CD4-positive, alpha-beta memory T cell (primary cell): ENCODE measurements at regions of chr3 and their contacts with region 1.

Region 1: GRCh38 chr3:196739671-196740480 is at the start of gene PAK2:
- DNase-seq: peak; percentile 85 to 90 (median 87)
- H3K4me3 ChIP-seq: peak within 1 kb of the TSS; percentile 70 to 95
- H3K4me3 Mint-ChIP-seq: peak within 1 kb of the TSS; percentile 96 to 100 (median 100)
- H3K27ac ChIP-seq: peak within 1 kb of the TSS; percentile 99
- H3K27ac Mint-ChIP-seq: peak within 1 kb of the TSS; percentile 97 to 100 (median 99)
- H3K4me1 ChIP-seq: peaks cover 42% of the 10 kb centered on the region
- H3K4me1 Mint-ChIP-seq: peaks cover 21 to 45% (median 28%) of the 10 kb centered on the region in 4 donors
- H3K27me3 ChIP-seq: no peaks in the 10 kb centered on the region
- H3K27me3 Mint-ChIP-seq: no peaks in the 10 kb centered on the region
- total RNA-seq, gene PAK2: 80.4 to 97.4 TPM

Region 2: GRCh38 chr3:196632046-196632751 is 107.7 kb before region 1 on chr3:
- CTCF ChIA-PET with region 1: interaction called, 3 read pairs
- POLR2A ChIA-PET with region 1: interaction called, 17 read pairs
- intact Hi-C with region 1: no loop called
- DNase-seq: peak; percentile 91 to 94 (median 92)
- H3K4me3 ChIP-seq: peak overlapping the region; percentile 24 to 77
- H3K4me3 Mint-ChIP-seq: peak overlapping the region; percentile 80 to 93 (median 86)
- H3K27ac ChIP-seq: peak overlapping the region; percentile 69
- H3K27ac Mint-ChIP-seq: peak overlapping the region; percentile 94 to 98 (median 96)
- H3K4me1 ChIP-seq: peaks cover 57% of the 10 kb centered on the region
- H3K4me1 Mint-ChIP-seq: peaks cover 34 to 70% (median 52%) of the 10 kb centered on the region in 4 donors
- H3K27me3 ChIP-seq: no peaks in the 10 kb centered on the region
- H3K27me3 Mint-ChIP-seq: no peaks in the 10 kb centered on the region

Region 3: DNA sequence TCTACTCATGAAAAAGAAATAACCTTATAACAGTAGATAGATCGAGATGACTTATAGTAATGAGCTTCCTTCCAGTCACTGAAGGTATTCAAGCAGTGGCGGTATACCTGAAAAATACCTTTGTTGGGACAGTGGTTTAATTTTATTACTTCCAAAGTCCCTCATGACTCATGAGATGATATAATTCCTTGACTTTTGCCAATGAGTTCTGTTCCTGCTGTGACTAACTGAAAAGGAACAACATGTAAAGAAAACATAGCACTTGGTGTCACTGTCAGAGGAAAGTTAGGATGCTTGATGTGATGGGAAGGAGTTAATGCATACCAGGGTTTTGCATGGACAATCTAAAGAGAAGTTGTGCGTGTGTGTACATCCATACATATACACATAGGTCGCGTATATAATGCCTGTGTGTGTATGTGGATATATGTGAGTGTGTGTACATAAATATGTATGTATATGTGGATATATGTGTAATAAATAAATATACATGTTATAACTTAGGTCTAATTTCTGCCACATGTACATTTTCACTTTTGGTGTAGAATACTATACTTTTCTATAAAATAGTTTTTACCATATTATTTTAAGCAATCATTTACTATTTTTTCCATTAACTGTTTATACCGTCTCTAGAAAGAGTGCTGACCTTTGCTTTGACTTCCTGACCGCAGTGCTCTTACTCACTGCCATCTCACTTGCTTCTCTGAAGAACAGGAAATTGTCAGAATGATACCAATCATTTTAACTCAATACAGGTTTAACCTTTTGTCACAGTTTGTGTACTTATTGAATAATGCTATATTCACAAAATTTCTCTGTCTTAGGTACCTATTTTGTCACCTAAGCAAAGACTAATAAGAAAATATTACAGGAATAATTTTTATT is 12.8 kb before region 1 on chr3:
- CTCF ChIA-PET with region 1: no interaction called
- POLR2A ChIA-PET with region 1: interaction called, 14 read pairs
- intact Hi-C with region 1: no loop called
- DNase-seq: peak in 3 of 5 donors; percentile 13 to 52 (median 16)
- H3K4me3 ChIP-seq: no peak overlapping the region
- H3K4me3 Mint-ChIP-seq: peak overlapping the region in 2 of 8 donors; percentile 11 to 36
- H3K27ac ChIP-seq: no peak overlapping the region
- H3K27ac Mint-ChIP-seq: peak overlapping the region in 4 of 7 donors; percentile 13 to 53 (median 44)
- H3K4me1 ChIP-seq: peaks cover 19% of the 10 kb centered on the region
- H3K4me1 Mint-ChIP-seq: peaks cover 11 to 31% (median 19%) of the 10 kb centered on the region in 4 donors
- H3K27me3 ChIP-seq: no peaks in the 10 kb centered on the region
- H3K27me3 Mint-ChIP-seq: no peaks in the 10 kb centered on the region

Region 4: DNA sequence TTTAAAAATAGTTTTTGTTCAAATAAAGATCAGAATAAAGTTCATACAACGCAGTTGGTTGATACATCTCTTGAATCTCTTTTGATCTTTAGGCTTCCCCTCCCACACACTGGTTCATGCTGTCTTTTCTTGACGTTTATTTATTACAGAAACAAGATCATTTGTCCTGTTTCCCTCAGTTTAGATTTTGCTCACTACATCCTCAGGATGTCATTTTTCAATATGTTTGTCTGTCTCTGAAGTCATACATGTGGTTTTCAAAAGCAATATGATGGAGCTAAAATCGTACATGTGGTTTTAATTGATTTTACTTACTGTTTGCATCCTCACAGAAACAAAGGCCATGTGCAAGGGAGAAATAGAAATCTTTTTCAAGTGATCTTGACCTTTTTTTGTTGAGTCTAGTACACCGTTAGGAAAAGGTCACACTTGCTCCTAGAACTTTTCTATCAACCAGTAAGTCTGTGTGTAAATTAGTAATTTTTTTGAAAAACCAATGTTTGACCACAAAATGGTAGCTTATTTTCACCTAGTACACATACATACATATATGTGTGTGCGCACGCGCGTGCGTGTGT is 64.1 kb after region 1 on chr3:
- CTCF ChIA-PET with region 1: no interaction called
- POLR2A ChIA-PET with region 1: interaction called, 4 read pairs
- intact Hi-C with region 1: loop called (anchors 10 kb)
- DNase-seq: peak in 3 of 5 donors; percentile 2 to 25 (median 4)
- H3K4me3 ChIP-seq: no peak overlapping the region
- H3K4me3 Mint-ChIP-seq: no peak overlapping the region
- H3K27ac ChIP-seq: no peak overlapping the region
- H3K27ac Mint-ChIP-seq: peak overlapping the region; percentile 30 to 92 (median 82)
- H3K4me1 ChIP-seq: no peaks in the 10 kb centered on the region
- H3K4me1 Mint-ChIP-seq: peaks cover 10 to 14% (median 12%) of the 10 kb centered on the region in 4 donors
- H3K27me3 ChIP-seq: no peaks in the 10 kb centered on the region
- H3K27me3 Mint-ChIP-seq: no peaks in the 10 kb centered on the region

Region 5: GRCh38 chr3:197994736-197995135 is 1254.9 kb after region 1 on chr3:
- CTCF ChIA-PET with region 1: no interaction called
- POLR2A ChIA-PET with region 1: no interaction called
- intact Hi-C with region 1: no loop called
- DNase-seq: no peak
- H3K4me3 ChIP-seq: no peak overlapping the region
- H3K4me3 Mint-ChIP-seq: no peak overlapping the region
- H3K27ac ChIP-seq: no peak overlapping the region
- H3K27ac Mint-ChIP-seq: no peak overlapping the region
- H3K4me1 ChIP-seq: no peaks in the 10 kb centered on the region
- H3K4me1 Mint-ChIP-seq: no peaks in the 10 kb centered on the region
- H3K27me3 ChIP-seq: no peaks in the 10 kb centered on the region
- H3K27me3 Mint-ChIP-seq: no peaks in the 10 kb centered on the region